Breast epithelium (tissue), 4 donors: ENCODE measurements at regions of chr3 and their contacts with region 1.

Region 1: DNA sequence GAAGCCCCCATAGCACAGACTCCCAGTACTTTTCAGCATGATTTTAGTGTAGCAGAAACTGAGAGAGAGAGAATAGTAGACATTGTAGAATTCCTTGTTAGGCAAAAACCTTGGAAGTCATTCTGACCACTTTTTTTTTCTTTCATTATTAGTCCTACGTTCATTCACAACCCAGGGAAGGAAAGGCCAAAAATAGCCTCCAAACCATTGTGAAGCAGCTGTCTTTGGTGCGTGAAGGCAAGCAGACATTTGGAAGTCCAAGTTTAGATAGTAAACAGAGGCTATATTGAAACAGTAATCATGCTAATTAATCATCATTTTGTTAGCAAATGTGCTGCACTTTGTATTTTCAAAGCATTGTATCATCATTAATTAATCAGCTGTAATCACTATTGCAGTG is 34.5 kb downstream of the CCDC54 start:
- DNase-seq: no peak
- H3K4me3 ChIP-seq: no peak overlapping the region
- H3K27ac ChIP-seq: no peak overlapping the region
- H3K4me1 ChIP-seq: no peaks in the 10 kb centered on the region
- H3K27me3 ChIP-seq: no peaks in the 10 kb centered on the region
- CTCF ChIP-seq: no peak
- POLR2A ChIP-seq: no peak

Region 2: DNA sequence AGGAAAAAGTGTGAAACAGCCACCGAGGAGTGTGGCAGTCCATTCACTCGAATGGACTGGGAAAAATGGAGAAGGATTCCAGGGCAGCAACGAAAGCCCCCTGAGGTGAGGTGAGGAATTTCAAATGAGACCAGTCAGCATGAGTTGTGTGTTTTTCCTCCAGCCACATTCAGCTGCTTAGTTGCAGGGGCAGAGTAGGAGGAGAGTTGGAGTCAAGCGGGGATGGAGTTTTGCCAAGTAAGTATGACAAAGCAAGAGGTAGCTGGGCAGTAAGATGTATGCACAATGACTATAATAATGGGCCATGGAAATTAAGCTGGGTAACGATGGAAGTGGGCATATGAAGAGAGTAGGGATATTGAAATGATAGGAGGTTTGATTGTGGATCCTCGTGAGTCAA is 29.8 kb after region 1 on chr3:
- intact Hi-C with region 1: no loop called
- DNase-seq: no peak
- H3K4me3 ChIP-seq: no peak overlapping the region
- H3K27ac ChIP-seq: no peak overlapping the region
- H3K4me1 ChIP-seq: no peaks in the 10 kb centered on the region
- H3K27me3 ChIP-seq: no peaks in the 10 kb centered on the region
- CTCF ChIP-seq: no peak
- POLR2A ChIP-seq: no peak

Region 3: GRCh38 chr3:107487490-107487889 is 75.7 kb after region 1 on chr3:
- intact Hi-C with region 1: loop called (anchors 2 kb)
- DNase-seq: no peak
- H3K4me3 ChIP-seq: no peak overlapping the region
- H3K27ac ChIP-seq: no peak overlapping the region
- H3K4me1 ChIP-seq: no peaks in the 10 kb centered on the region
- H3K27me3 ChIP-seq: no peaks in the 10 kb centered on the region
- CTCF ChIP-seq: no peak
- POLR2A ChIP-seq: no peak